ENCODE measurements at regions of chr14 and their contacts with region 1.

Region 1: DNA sequence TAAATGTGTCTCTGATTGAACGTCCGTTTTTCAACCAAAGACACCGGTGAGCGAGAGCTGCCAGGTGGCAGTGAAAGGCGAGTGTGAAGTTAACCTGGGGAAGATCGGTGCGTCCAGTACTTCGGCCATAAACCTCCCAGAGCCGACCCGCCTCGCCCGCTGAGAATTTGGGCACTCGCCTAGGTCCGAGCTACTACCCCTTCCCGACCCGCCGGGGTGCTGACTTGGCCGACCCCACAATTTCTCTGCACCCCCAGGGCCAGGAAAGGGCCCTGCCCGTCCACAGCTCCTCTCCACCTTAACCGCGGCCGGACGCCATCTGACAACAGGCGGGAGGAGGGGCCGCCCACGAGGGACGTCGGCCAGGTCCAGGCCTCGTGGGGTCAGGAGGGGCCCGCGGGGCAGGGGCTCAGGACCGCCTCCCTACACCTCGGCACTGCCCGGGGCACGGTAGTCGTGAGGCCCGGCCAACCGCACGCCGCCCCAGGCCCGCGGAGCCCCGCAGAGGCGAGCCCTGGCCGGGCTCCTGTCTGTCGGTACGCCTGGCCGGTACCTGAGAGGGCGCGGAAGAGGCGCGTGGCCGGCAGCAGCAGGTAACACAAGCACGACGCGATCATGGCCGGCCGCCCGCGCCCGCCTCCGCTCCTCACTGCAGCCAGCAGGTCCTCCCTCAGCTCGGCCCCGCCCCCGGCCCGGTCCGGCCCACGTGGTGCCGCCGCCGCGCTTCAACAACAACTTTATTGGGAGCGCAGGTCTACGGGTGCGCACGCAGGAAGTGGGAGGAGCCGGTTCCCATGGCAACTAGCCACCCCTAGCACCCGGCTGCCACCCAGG is at the start of gene ANGEL1:
- DNase-seq: peak; percentile 99
- ATAC-seq: peak; percentile 95
- H3K4me3 ChIP-seq: peak within 1 kb of the TSS; percentile 31 to 79 (median 72)
- H3K4me3 Mint-ChIP-seq: peak within 1 kb of the TSS; percentile 90
- H3K27ac ChIP-seq: peak within 1 kb of the TSS; percentile 65 to 84
- H3K27ac Mint-ChIP-seq: peak within 1 kb of the TSS; percentile 99
- H3K4me1 ChIP-seq: peaks cover 20 to 25% of the 10 kb centered on the region in 2 donors
- H3K4me1 Mint-ChIP-seq: peaks cover 28% of the 10 kb centered on the region
- H3K27me3 ChIP-seq: peaks cover 0 to 5% (median 2%) of the 10 kb centered on the region in 4 experiments
- H3K27me3 Mint-ChIP-seq: no peaks in the 10 kb centered on the region
- CTCF ChIP-seq: no peak
- total RNA-seq, gene ANGEL1: 25.2 and 27.3 TPM in 2 replicates

Region 2: DNA sequence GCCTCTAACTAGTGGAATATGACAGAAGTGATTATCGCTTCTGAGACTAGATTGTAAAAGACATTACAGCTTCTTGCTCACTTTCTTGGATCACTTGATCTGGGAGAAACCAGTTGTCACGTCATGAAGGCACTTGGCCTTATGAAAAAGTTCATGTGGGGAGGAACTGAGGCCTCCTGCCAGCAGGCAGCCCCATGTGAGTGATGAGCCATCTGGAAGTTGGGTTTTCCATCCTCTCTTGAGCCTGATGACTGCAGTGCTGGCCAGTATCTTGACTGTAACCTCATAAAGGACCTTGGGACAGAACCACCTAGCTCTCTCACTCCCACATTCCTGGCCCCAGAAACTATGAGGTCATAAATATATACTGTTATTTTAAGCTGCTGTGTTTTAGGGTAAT is 1123.4 kb before region 1 on chr14:
- CTCF ChIA-PET with region 1: no interaction called
- POLR2A ChIA-PET with region 1: no interaction called
- intact Hi-C with region 1: no loop called
- DNase-seq: no peak
- ATAC-seq: no peak
- H3K4me3 ChIP-seq: no peak overlapping the region
- H3K4me3 Mint-ChIP-seq: no peak overlapping the region
- H3K27ac ChIP-seq: no peak overlapping the region
- H3K27ac Mint-ChIP-seq: no peak overlapping the region
- H3K4me1 ChIP-seq: no peaks in the 10 kb centered on the region
- H3K4me1 Mint-ChIP-seq: no peaks in the 10 kb centered on the region
- H3K27me3 ChIP-seq: no peaks in the 10 kb centered on the region
- H3K27me3 Mint-ChIP-seq: no peaks in the 10 kb centered on the region
- CTCF ChIP-seq: no peak

Region 3: DNA sequence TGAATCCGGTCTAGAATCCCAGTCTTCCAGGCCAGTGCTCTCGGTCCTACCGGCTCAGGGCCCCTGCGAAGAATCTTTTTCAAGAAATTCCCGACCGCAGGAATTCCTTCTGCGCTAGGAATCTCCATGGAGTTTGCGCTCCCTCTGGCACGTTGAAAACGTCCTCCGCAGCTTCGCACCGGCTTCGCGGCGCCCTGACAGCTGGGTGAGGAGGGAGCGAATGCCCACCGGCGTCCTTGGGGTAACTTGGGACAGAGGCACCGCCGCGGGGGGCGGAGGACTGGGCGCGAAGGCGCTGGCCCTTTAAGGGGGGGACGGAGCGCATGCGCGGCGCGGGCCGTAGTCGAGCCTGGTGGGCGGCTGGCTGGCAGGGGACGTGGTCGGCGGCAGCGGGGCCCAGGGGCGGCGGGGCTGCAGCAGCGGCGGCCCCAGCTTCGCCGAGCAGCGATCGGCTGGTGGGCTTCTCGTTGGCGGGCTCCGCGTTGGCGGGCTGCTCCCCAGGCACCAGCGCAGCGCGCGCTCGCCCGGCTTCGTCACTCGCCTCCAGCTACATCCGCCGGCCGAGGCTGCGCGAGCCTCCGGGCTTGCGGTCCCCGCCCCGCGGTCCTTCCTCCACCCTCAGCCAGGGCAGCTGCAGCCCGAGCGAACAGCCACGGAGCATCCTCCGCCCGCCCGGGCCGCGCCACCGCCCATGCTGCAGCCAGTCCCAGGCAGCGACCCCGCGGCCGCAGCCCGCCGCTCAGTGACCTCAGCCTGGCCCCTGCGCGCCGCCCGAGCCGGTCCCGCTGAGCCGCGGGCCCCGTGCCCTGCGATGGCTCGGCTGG is 51.1 kb before region 1 on chr14 and contains the start of gene VASH1:
- CTCF ChIA-PET with region 1: no interaction called
- POLR2A ChIA-PET with region 1: no interaction called
- intact Hi-C with region 1: loop called (anchors 5 kb)
- DNase-seq: peak; percentile 64
- ATAC-seq: peak; percentile 87
- H3K4me3 ChIP-seq: peak within 1 kb of the TSS; percentile 11 to 68 (median 52)
- H3K4me3 Mint-ChIP-seq: peak within 1 kb of the TSS; percentile 85
- H3K27ac ChIP-seq: peak within 1 kb of the TSS in 1 of 2 donors; percentile 23
- H3K27ac Mint-ChIP-seq: peak within 1 kb of the TSS; percentile 41
- H3K4me1 ChIP-seq: peaks cover 13 to 14% of the 10 kb centered on the region in 2 donors
- H3K4me1 Mint-ChIP-seq: peaks cover 10% of the 10 kb centered on the region
- H3K27me3 ChIP-seq: peaks cover 0 to 27% (median 11%) of the 10 kb centered on the region in 4 experiments
- H3K27me3 Mint-ChIP-seq: peaks cover 37% of the 10 kb centered on the region
- CTCF ChIP-seq: no peak
- total RNA-seq, gene VASH1: 2.4 and 2.7 TPM in 2 replicates

Region 4: DNA sequence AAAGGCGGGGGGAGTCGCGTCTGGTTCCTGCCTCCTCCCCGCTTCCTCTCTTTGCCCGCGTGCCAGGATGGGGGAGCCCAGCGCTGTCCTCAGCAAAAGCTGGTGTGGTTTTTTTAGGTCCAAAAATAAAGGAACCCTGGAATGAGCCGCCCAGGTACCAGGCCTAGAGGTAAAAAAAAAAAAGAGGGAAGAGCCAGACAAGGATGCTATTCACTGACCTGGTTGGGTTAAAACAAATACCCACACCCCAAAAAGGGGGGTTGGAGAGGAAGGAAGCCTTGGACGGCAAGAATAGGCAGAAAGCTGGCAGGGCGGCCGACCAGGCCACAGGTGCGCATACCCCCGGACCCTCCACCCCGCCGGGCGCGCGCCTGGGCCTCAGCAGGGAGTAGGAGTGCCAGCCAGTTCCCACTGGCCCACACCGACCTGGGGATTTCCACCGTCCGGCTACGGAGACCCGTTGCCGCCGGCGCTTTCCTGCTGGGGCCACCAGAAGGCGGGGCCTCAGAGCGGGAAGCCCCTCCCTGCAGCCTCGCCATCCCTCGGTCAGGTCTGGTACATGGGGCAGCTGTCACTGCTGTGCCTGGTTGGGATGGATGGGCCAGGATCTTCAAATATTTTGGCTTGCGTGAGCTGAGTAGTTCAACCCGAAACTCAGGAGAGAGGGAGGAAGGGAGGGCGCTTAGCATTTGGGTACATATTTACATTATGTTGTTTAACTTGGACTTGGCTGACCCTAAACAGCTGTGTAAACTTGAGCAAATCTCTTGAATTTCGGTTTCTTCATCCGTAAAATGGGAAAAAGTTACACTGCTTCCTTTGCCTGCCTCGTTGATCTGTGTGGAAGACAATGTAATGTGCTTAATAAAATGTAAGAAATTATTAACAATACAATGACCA is 221.4 kb after region 1 on chr14:
- CTCF ChIA-PET with region 1: no interaction called
- POLR2A ChIA-PET with region 1: no interaction called
- intact Hi-C with region 1: loop called (anchors 2 kb)
- DNase-seq: peak; percentile 92
- ATAC-seq: peak; percentile 78
- H3K4me3 ChIP-seq: peak overlapping the region; percentile 63 to 86 (median 65)
- H3K4me3 Mint-ChIP-seq: peak overlapping the region; percentile 93
- H3K27ac ChIP-seq: peak overlapping the region; percentile 97 to 99
- H3K27ac Mint-ChIP-seq: peak overlapping the region; percentile 95
- H3K4me1 ChIP-seq: peaks cover 51 to 63% of the 10 kb centered on the region in 2 donors
- H3K4me1 Mint-ChIP-seq: peaks cover 66% of the 10 kb centered on the region
- H3K27me3 ChIP-seq: no peaks in the 10 kb centered on the region
- H3K27me3 Mint-ChIP-seq: no peaks in the 10 kb centered on the region
- CTCF ChIP-seq: no peak

Region 5: GRCh38 chr14:77076874-77077439 is 264.5 kb after region 1 on chr14:
- CTCF ChIA-PET with region 1: no interaction called
- POLR2A ChIA-PET with region 1: no interaction called
- intact Hi-C with region 1: no loop called
- DNase-seq: no peak
- ATAC-seq: no peak
- H3K4me3 ChIP-seq: no peak overlapping the region
- H3K4me3 Mint-ChIP-seq: no peak overlapping the region
- H3K27ac ChIP-seq: no peak overlapping the region
- H3K27ac Mint-ChIP-seq: no peak overlapping the region
- H3K4me1 ChIP-seq: peaks cover 0 to 13% of the 10 kb centered on the region in 2 donors
- H3K4me1 Mint-ChIP-seq: peaks cover 12% of the 10 kb centered on the region
- H3K27me3 ChIP-seq: peaks cover 0 to 2% (median 0%) of the 10 kb centered on the region in 4 experiments
- H3K27me3 Mint-ChIP-seq: no peaks in the 10 kb centered on the region
- CTCF ChIP-seq: no peak